PC-9 (cell line): ENCODE measurements at regions of chr3 and their contacts with region 1.

Region 1: DNA sequence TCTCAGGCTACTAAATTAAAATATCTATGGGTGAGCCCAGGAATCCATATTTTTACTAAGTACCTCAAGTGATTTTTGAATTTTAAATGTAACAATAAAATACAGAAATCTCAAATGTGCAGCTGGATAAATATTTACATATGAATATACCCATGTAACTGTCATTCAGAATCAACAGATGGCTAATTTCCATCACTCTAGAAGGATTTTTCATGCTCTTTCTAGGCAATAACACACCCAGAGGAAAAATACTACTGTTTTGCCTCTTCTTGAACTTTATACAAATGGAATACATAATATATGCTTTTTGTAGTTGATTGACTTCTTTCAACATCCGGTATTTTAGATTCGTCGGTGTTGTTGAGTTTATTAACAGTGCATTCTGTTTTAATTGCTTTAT is 601.3 kb upstream of the NECTIN3 start:
- DNase-seq: no peak
- H3K4me3 ChIP-seq: no peak overlapping the region
- H3K27ac ChIP-seq: no peak overlapping the region
- H3K4me1 ChIP-seq: no peaks in the 10 kb centered on the region
- H3K27me3 ChIP-seq: no peaks in the 10 kb centered on the region
- CTCF ChIP-seq: no peak

Region 2: DNA sequence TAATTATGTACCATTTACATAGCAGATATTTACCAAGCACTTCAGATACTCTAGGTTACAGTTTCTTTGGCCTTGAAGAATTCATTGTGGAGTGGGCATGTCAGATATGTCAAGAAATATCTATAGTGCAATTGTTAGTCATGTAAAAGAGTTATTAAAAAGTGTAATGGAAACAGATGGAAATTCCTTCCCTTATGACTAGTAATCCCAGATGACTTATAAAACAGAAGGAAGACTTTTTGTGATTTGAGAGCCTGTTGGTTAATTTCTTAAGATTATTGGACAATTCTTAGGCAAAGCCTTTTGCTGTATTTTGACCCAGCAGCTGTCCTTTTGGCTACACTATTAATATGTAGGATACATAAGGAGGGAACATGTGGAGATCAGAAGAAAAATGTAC is 107.6 kb before region 1 on chr3:
- CTCF ChIA-PET with region 1: no interaction called
- POLR2A ChIA-PET with region 1: no interaction called
- intact Hi-C with region 1: no loop called
- DNase-seq: no peak
- H3K4me3 ChIP-seq: no peak overlapping the region
- H3K27ac ChIP-seq: no peak overlapping the region
- H3K4me1 ChIP-seq: no peaks in the 10 kb centered on the region
- H3K27me3 ChIP-seq: no peaks in the 10 kb centered on the region
- CTCF ChIP-seq: no peak

Region 3: GRCh38 chr3:110420158-110420641 is 50.1 kb before region 1 on chr3:
- CTCF ChIA-PET with region 1: no interaction called
- POLR2A ChIA-PET with region 1: no interaction called
- intact Hi-C with region 1: loop called (anchors 1 kb)
- DNase-seq: no peak
- H3K4me3 ChIP-seq: no peak overlapping the region
- H3K27ac ChIP-seq: peak overlapping the region; percentile 40; the same call in 1 of the 2 replicates
- H3K4me1 ChIP-seq: peaks cover 10% of the 10 kb centered on the region
- H3K27me3 ChIP-seq: no peaks in the 10 kb centered on the region
- CTCF ChIP-seq: no peak

Region 4: GRCh38 chr3:111087924-111088469 is 617.7 kb after region 1 on chr3:
- CTCF ChIA-PET with region 1: no interaction called
- POLR2A ChIA-PET with region 1: no interaction called
- intact Hi-C with region 1: no loop called
- DNase-seq: no peak
- H3K4me3 ChIP-seq: no peak overlapping the region
- H3K27ac ChIP-seq: no peak overlapping the region
- H3K4me1 ChIP-seq: no peaks in the 10 kb centered on the region
- H3K27me3 ChIP-seq: no peaks in the 10 kb centered on the region
- CTCF ChIP-seq: no peak